ENCODE measurements at regions of chr2 and their contacts with region 1.

Region 1: DNA sequence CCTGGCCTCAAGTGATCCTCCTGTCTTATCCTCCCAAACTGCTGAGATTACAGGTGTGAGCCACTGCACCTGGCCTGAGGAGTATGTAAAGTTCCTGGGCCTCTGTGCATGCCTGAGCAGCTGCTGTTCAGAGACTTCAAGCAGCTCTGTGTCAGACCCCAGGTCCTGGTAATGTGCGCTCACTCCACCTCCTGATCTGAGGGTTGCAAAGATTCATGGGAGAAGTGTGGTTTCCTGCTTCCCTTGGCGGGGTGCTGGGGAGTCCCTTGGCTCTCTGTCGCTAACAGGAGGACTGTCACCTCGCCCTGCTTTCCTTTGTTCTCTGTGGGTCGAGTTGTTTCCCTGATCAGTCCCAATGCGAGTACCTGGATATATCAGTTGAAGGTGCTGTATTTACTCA is 8.6 kb upstream of the IL36A start:
- DNase-seq: no peak
- H3K4me3 ChIP-seq: no peak overlapping the region
- H3K27ac ChIP-seq: no peak overlapping the region
- H3K4me1 ChIP-seq: no peaks in the 10 kb centered on the region
- H3K27me3 ChIP-seq: no peaks in the 10 kb centered on the region
- CTCF ChIP-seq: no peak
- POLR2A ChIP-seq: no peak

Region 2: GRCh38 chr2:112906276-112906675 is 90.4 kb before region 1 on chr2:
- intact Hi-C with region 1: no loop called
- DNase-seq: no peak
- H3K4me3 ChIP-seq: no peak overlapping the region
- H3K27ac ChIP-seq: no peak overlapping the region
- H3K4me1 ChIP-seq: no peaks in the 10 kb centered on the region
- H3K27me3 ChIP-seq: no peaks in the 10 kb centered on the region
- CTCF ChIP-seq: no peak
- POLR2A ChIP-seq: no peak

Region 3: DNA sequence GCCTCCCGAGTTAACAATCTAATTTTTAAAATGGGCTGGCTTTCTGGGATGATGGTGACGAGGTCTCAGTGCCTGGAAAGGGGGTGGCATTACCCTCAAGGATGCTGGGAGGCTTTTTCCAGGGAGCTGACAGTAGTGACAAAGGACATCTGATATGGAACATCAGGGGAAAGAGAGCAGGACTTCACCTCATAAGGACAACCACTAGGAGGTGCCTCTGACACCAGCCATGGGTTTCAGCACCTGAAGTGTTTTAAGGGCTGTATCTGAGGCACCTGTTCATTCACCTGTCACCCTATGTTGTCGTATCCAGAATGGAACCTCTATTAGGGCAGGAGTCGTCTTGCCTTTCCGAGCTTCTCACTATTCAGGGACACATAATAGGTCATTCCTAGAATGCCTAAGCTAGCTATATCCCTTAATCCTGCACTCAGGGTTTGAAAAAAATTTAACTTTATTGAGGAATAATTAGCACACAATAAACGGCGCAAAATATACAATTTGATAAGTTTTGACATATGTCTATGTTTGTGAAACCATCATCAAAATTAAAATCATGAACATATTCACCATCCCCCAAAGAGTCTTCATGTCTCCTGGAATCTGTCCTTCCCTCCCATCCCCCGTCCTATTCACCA is 45.4 kb after region 1 on chr2:
- intact Hi-C with region 1: loop called (anchors 2 kb)
- DNase-seq: no peak
- H3K4me3 ChIP-seq: no peak overlapping the region
- H3K27ac ChIP-seq: no peak overlapping the region
- H3K4me1 ChIP-seq: no peaks in the 10 kb centered on the region
- H3K27me3 ChIP-seq: no peaks in the 10 kb centered on the region
- CTCF ChIP-seq: no peak
- POLR2A ChIP-seq: no peak